ENCODE measurements at regions of chr17 and their contacts with region 1.

Region 1: DNA sequence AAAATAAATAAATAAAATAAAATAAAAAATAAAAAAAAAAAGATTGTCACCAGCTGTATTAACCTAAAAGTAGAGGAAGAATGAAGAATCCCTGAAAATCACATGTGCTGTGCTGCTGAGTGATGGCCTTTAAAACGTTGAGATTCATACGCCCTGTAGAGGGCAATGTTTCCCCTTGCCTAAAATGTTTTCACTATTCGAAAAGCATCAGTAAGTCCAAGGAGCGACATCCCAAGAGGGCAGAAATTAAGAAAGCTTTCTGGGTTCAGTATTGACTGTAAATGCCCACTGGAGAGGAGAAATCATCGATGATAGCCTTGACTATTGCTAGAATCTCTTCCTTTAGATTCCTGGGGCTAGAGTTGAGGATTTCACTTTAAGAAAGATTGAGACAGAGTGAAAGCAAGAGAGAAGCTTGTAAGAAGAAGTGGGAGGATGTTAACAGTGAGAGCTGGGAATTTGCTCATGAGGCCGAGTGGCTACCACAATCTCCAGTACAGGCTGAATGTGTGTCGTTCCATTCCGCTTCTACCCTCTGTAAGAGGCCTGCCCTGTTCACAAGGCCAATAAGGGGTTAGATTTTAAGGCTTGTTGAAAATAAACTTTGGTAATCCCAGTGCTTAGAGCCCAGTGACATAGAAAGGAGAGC is 170.8 kb upstream of the FAM20A start:
- DNase-seq: peak; percentile 50
- H3K4me3 ChIP-seq: no peak overlapping the region
- H3K27ac ChIP-seq: no peak overlapping the region
- H3K27me3 ChIP-seq: no peaks in the 10 kb centered on the region
- CTCF ChIP-seq: peak; percentile 83

Region 2: DNA sequence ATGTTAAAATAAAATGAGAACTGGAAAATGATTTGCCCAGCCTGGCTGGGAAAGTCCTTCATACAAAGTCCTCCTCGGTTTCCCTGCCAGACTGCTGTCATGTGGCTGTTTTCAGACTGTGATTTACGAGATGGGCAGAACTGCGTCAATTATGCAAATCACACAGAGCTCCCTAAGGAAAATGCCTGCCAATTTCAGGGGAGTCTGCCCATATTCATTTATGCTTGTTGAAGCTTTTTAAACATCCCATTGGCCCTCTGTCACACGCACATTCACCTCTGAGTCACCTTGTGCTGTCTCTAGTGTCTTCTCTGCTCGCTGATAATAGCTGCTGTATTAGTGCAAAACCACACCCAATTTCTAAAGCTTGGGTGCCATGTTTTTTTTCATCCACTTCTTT is 89.1 kb before region 1 on chr17:
- CTCF ChIA-PET with region 1: no interaction called
- POLR2A ChIA-PET with region 1: no interaction called
- DNase-seq: no peak
- H3K4me3 ChIP-seq: no peak overlapping the region
- H3K27ac ChIP-seq: no peak overlapping the region
- H3K27me3 ChIP-seq: no peaks in the 10 kb centered on the region
- CTCF ChIP-seq: no peak

Region 3: GRCh38 chr17:68759343-68760132 is 12.5 kb before region 1 on chr17:
- CTCF ChIA-PET with region 1: interaction called, 11 read pairs
- POLR2A ChIA-PET with region 1: no interaction called
- DNase-seq: peak; percentile 86
- H3K4me3 ChIP-seq: peak overlapping the region; percentile 50
- H3K27ac ChIP-seq: peak overlapping the region; percentile 88
- H3K27me3 ChIP-seq: no peaks in the 10 kb centered on the region
- CTCF ChIP-seq: peak; percentile 99

Region 4: DNA sequence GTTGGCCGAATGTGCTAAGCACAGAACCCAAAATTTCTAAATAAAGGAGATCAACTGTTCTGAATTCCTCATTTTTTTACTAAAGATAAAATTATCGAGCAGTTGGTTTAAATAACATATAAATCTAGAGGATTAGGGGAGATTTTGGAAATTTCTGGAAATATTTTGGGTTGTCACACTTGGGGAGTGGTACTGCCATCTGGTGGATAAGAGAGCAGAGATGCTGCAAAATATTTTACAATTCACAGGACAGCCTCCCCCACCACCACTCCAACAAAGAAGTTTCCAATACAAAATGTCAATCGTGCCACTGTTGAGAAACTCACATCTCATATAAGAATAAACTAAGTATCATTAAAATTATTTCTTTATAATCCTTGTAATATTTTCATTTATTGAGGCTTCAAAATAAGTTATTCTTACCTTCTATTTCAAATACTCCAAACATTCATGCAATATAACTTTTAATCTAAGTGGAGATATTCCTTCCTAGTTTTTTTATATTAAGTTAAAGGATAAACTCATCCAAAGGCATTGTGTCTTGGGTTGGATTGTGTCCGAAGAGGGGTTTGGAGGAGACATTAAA is 200.2 kb after region 1 on chr17:
- CTCF ChIA-PET with region 1: interaction called, 46 read pairs
- POLR2A ChIA-PET with region 1: no interaction called
- DNase-seq: no peak
- H3K4me3 ChIP-seq: no peak overlapping the region
- H3K27ac ChIP-seq: no peak overlapping the region
- H3K27me3 ChIP-seq: no peaks in the 10 kb centered on the region
- CTCF ChIP-seq: peak; percentile 77

Region 5: DNA sequence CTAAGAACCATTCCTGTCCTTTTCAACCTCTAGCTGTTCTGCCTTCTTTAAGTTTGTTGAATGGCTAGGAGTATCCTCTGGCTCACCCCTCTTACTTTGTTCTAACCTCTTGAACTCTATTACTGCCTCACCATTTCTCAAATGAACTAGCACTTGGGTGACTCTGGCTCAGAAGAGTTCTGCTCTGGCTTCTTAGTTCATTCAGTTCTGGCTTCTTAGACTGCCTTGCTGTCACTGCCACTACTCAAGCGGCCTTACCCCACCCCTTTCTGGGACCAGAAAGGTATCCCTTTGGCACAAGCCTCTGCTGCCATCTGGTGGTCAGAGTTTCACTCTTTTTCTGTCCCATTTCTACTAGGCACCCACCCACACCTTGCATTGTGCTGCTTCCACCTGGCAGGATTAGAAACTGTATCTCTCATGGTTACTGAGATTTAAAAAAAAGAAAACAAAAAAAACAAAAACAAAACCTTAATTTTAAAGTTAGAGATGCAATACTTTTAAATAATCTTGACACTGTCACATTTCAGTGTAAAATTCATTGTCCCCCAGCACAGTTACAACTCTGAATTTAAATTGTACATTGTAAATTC is 463.4 kb after region 1 on chr17:
- CTCF ChIA-PET with region 1: interaction called, 115 read pairs
- POLR2A ChIA-PET with region 1: no interaction called
- DNase-seq: peak; percentile 51
- H3K4me3 ChIP-seq: no peak overlapping the region
- H3K27ac ChIP-seq: no peak overlapping the region
- H3K27me3 ChIP-seq: no peaks in the 10 kb centered on the region
- CTCF ChIP-seq: peak; percentile 82

Region 6: DNA sequence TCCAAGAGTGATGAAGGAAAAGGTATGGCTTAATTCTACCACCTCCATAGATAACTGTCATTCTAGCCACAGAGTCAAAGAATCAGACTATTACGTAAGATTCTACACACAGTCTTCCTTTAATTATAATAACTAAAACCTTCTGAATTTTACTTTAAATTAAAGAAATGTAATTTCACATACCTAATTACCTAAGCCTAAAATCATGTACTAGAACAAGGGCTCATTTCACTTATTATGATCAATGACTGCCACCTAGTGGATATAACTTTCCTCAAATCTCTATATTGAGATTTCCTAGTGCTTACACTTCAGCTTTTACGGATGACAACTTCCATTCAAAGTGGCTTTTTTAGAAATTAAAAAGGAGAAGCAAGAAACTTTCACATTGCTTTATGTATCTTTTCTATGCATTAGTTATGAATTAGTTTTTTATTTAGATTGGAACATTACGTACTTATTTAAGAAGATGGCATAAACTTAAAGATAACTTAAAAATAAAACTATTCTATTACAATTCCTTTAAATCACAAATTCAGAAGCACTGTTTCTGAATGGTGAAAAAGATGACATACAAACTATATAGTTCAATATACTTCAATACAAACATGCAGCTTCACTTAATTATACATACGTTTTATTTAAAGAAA is 474.9 kb after region 1 on chr17:
- CTCF ChIA-PET with region 1: interaction called, 115 read pairs
- POLR2A ChIA-PET with region 1: no interaction called
- DNase-seq: no peak
- H3K4me3 ChIP-seq: no peak overlapping the region
- H3K27ac ChIP-seq: no peak overlapping the region
- H3K27me3 ChIP-seq: no peaks in the 10 kb centered on the region
- CTCF ChIP-seq: peak; percentile 54